Stomach (tissue), 19 donors: ENCODE measurements at regions of chr4 and their contacts with region 1.

Region 1: GRCh38 chr4:52968691-52969090 is 106.6 kb downstream of the RASL11B start:
- DNase-seq: no peak
- H3K4me3 ChIP-seq: no peak overlapping the region
- H3K27ac ChIP-seq: no peak overlapping the region
- H3K4me1 ChIP-seq: peaks cover 0 to 7% (median 0%) of the 10 kb centered on the region in 4 donors
- H3K27me3 ChIP-seq: no peaks in the 10 kb centered on the region
- CTCF ChIP-seq: no peak
- EP300 ChIP-seq: no peak
- POLR2A ChIP-seq: no peak

Region 2: DNA sequence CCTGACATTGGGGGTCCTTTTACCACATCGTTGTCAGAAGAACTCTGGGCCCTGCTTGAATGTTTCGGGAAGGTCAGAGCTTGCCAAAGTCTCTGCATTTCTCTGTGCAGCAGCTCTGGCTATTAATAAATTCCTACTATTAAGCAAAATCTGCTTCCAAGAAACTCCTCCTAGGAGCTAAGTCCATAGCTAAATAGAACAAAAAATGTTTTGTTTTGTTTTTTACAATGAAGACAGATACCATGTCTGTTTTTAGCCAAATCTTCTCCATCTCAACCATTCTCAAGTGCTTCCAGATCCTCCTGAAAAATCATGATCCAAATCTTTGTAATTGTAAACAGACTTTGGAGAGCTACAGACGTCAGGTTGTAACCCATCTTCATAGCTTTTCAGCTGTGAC is 756.0 kb before region 1 on chr4:
- intact Hi-C with region 1: loop called (anchors 10 kb)
- DNase-seq: peak in 1 of 2 donors; percentile 54
- H3K4me3 ChIP-seq: no peak overlapping the region
- H3K27ac ChIP-seq: no peak overlapping the region
- H3K4me1 ChIP-seq: no peaks in the 10 kb centered on the region
- H3K27me3 ChIP-seq: no peaks in the 10 kb centered on the region
- CTCF ChIP-seq: no peak
- EP300 ChIP-seq: no peak
- POLR2A ChIP-seq: no peak